ENCODE measurements at regions of chr11 and their contacts with region 1.

Region 1: GRCh38 chr11:119339589-119340343 is 917 bp downstream of the C1QTNF5 start:
- DNase-seq: peak; percentile 78

Region 2: DNA sequence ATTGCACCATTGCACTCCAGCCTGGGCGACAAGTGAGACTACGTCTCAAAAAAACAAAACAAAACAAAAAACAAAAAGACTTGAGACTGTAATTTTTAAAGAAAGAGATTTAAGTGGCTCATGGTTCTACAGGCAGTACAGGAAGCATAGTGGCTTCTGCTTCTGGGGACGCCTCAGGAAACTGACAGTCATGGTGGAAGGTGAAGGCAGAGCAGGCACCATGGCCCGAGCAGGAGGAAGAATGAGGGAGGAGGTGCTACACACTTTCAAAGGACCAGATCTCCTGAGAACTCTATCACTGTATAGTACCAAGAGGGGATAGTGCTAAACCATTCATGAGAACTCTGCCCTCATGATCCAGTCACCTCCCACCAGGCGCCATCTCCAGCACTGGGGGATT is 81.6 kb before region 1 on chr11:
- intact Hi-C with region 1: no loop called
- DNase-seq: no peak

Region 3: GRCh38 chr11:119323538-119324033 is 16.2 kb before region 1 on chr11:
- intact Hi-C with region 1: no loop called
- DNase-seq: no peak

Region 4: DNA sequence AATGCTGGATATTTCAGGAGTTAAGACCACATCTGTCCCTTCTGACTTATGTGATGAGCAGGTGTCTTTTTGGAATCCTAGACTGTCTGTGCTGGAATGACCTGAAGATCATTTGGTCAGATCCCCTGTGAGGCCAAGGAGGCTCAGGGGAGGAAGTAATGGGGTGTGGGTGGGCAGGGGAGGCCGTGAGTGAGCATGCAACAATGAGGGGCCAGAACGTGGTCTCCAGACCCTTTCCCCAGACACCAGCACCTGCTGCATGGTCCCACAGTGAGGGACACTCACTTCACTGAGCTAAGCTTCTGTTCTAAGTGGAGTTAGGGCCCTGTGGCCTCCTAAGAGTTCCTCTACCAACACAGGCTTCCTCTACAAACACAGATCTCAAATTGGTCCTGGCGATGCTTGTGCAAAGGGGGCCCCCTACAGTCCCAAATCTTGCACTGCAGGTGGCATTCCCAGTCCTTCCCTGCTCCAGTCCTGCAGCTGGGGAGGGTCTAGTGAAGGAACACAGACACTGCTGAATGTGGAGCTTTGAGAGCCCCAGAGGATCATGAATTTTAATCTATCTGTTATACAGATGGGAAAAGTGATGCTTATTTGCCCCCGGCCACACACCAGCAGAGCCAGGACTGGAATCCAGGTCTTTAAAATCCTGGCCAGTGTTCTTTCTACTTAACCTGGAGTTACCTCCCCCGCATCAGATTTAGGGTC is 34.3 kb after region 1 on chr11:
- intact Hi-C with region 1: loop called (anchors 2 kb)
- DNase-seq: no peak